Posterior vena cava (tissue), 2 donors: ENCODE measurements at regions of chr17 and their contacts with region 1.

Region 1: DNA sequence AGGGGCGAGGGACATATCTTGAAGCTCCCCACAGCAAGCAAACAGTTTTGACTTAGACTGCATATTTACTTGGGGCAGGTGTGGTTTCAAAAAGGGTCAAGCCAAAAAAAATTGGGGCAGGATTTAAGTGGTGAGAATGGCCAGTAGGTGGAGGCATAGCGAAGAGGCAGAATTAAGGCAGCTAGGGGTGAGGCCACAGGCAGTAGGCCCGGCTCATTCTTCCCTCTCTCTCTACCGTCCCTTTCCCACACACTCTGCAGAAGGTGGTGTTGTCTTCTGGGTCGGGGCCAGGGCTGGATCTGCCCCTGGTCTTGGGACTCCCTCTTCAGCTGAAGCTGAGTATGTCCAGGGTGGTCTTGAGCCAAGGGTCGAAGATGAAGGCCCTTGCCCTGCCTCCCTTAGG is 2.6 kb downstream of the SHBG start:
- DNase-seq: no peak

Region 2: DNA sequence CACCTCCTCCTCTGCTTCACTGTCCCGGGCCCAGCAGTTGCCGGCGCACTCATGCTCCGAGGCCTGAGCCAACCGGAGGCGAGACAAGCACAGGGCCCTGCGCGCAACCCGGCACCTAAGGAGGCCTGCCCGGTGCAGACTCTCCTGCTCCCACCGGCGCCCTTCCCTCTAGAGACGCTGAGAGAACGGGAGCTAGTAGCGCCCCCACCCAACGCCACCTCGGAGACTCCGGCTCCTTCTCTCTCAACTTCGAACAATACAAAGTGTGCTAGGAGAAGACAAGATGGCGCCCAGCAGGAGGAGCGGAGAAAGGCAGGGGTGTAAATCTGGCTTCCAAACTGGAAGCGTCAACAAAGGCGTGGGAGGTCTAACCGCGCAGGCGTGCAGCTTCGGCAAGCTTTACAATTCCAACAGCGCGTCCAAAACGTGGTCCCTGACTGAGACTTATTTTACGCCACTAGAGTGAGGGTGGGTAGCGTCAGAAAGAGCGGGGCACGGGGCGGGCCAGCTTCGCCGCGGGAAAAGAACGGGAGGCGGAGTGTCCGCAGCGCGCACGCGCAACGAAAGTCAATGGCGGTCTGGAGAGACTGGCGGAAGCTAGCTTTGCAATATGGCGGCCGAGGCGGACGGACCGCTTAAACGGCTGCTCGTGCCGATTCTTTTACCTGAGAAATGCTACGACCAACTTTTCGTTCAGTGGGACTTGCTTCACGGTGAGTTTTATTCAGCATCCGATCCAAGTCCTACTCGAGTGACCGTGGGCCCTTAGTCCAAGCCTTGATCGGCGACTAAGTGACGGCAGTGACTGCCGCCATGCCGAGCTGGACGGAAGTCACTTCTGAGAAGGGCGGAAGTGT is 49.0 kb before region 1 on chr17 and contains the start of gene MPDU1:
- intact Hi-C with region 1: no loop called
- DNase-seq: peak; percentile 99
- total RNA-seq, gene MPDU1: 24.7 to 31.2 TPM

Region 3: DNA sequence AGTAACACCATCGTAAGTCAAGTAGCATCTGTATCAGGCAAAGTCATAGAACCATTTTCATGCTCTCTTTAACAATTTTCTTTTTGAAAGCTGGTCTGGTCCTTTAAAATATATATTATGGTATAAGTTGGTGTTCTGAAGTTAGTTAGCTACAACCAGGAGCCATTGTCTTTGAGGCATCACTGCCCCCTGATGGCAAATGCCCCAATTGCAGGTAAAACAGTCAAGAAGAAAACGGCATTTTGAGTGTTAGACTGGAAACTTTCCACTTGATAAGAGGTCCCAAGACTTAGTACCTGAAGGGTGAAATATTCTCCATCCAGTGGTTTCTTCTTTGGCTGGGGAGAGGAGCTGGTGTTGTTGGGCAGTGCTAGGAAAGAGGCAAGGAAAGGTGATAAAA is 40.7 kb after region 1 on chr17:
- intact Hi-C with region 1: no loop called
- DNase-seq: no peak

Region 4: DNA sequence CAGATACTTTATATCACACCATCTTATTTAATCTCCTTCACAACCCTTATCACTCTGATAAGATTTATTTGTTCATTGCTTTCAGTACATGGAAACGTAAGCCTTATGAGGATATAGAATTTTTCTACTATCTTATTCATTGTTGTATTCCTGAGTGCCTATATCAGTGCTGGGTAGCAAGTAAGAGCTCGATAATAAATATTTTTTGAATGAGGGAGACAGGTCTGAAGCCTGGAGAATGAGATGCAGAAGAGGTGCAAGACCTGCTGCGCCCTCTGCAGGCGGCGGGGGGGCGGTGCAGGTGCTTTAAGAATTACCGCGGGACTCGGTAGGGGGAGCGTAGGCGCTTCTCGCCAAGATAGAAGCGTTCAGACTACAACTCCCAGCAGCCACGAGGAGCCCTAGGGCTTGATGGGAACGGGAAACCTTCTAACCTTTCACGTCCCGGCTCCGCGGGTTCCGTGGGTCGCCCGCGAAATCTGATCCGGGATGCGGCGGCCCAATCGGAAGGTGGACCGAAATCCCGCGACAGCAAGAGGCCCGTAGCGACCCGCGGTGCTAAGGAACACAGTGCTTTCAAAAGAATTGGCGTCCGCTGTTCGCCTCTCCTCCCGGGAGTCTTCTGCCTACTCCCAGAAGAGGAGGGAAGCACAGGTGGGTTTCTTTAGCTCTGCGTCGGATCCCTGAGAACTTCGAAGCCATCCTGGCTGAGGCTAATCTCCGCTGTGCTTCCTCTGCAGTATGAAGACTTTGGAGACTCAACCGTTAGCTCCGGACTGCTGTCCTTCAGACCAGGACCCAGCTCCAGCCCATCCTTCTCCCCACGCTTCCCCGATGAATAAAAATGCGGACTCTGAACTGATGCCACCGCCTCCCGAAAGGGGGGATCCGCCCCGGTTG is 55.7 kb after region 1 on chr17 and contains the start of gene WRAP53:
- intact Hi-C with region 1: loop called (anchors 2 to 10 kb)
- DNase-seq: peak; percentile 99
- total RNA-seq, gene WRAP53: 4.8 to 5.0 TPM